Activated T-helper 2 cell treated with anti-CD3 and anti-CD28 coated beads, Interferon-gamma antibody, Interleukin-2, Interleukin-4, amounts not matched to agents 10 μg/mL and 5 μg/mL and 100 μg/mL, durations not matched to agents 14 hours and 24 hours and 36 hours (primary cell): ENCODE measurements at regions of chr15 and their contacts with region 1.

Region 1: GRCh38 chr15:99504823-99505551 is 60.8 kb upstream of the MEF2A start:
- DNase-seq: no peak
- H3K4me3 Mint-ChIP-seq: peak overlapping the region; percentile 35
- H3K27ac Mint-ChIP-seq: peak overlapping the region; percentile 78
- H3K4me1 Mint-ChIP-seq: peaks cover 63% of the 10 kb centered on the region
- H3K27me3 Mint-ChIP-seq: no peaks in the 10 kb centered on the region

Region 2: GRCh38 chr15:99282121-99282520 is 222.9 kb before region 1 on chr15:
- intact Hi-C with region 1: loop called (anchors 2 kb)
- DNase-seq: no peak
- H3K4me3 Mint-ChIP-seq: no peak overlapping the region
- H3K27ac Mint-ChIP-seq: no peak overlapping the region
- H3K4me1 Mint-ChIP-seq: peaks cover 46% of the 10 kb centered on the region
- H3K27me3 Mint-ChIP-seq: no peaks in the 10 kb centered on the region

Region 3: DNA sequence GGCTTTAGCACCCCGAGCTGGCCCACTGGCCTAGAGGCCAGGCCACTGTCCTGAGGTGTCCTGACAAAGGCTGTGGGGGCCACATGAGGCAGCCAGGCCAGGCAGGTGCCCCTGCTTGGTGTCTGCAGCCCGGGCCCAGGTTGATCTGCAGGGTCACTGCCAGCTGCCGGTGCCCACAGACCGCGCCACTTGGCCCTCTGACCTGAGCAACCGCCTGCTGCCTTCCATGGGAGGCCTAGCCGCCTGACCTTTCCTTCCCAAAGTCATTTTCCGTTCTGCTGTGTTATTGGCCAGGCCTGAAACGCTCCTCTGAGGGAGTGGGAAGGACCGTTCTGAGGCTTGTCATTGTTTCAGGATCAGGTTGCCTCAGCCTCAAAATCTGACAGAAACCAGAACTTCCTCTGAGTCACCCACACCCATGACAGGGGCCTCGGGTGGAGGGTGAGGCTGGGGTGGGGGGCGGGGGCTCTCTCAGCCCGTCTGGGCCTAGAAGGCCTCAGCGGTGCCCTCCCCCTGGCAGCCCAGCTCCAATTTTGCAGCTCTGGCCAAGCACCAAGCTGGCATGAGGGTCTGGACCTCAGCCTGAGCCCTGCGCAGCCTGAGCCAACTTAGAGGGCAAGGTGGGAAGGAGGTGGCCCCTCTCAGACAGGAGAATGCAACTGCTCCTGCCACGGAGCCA is 79.9 kb before region 1 on chr15:
- intact Hi-C with region 1: loop called (anchors 2 kb)
- DNase-seq: peak; percentile 39
- H3K4me3 Mint-ChIP-seq: peak overlapping the region; percentile 9
- H3K27ac Mint-ChIP-seq: peak overlapping the region; percentile 80
- H3K4me1 Mint-ChIP-seq: peaks cover 38% of the 10 kb centered on the region
- H3K27me3 Mint-ChIP-seq: no peaks in the 10 kb centered on the region

Region 4: GRCh38 chr15:99450896-99451358 is 54.1 kb before region 1 on chr15:
- intact Hi-C with region 1: loop called (anchors 2 kb)
- DNase-seq: peak; percentile 37
- H3K4me3 Mint-ChIP-seq: peak overlapping the region; percentile 2
- H3K27ac Mint-ChIP-seq: no peak overlapping the region
- H3K4me1 Mint-ChIP-seq: peaks cover 42% of the 10 kb centered on the region
- H3K27me3 Mint-ChIP-seq: no peaks in the 10 kb centered on the region

Region 5: GRCh38 chr15:99565299-99566156 is 60.5 kb after region 1 on chr15 and contains the start of gene MEF2A:
- intact Hi-C with region 1: loop called (anchors 1 kb)
- DNase-seq: peak; percentile 92
- H3K4me3 Mint-ChIP-seq: peak within 1 kb of the TSS; percentile 98
- H3K27ac Mint-ChIP-seq: peak within 1 kb of the TSS; percentile 93
- H3K4me1 Mint-ChIP-seq: peaks cover 31% of the 10 kb centered on the region
- H3K27me3 Mint-ChIP-seq: peaks cover 8% of the 10 kb centered on the region
- total RNA-seq, gene MEF2A: 20.9 and 23.4 TPM in 2 replicates